ENCODE measurements at regions of chr11 and their contacts with region 1.

Region 1: GRCh38 chr11:128522055-128522942 is 65.1 kb downstream of the ETS1 start:
- DNase-seq: peak; percentile 81 to 90 (median 87)
- H3K4me3 ChIP-seq: peak overlapping the region; percentile 50 to 92
- H3K4me3 Mint-ChIP-seq: peak overlapping the region; percentile 92 to 100 (median 97)
- H3K27ac ChIP-seq: peak overlapping the region; percentile 89
- H3K27ac Mint-ChIP-seq: peak overlapping the region; percentile 96 to 99 (median 98)
- H3K4me1 ChIP-seq: peaks cover 45% of the 10 kb centered on the region
- H3K4me1 Mint-ChIP-seq: peaks cover 33 to 59% (median 44%) of the 10 kb centered on the region in 4 donors
- H3K27me3 ChIP-seq: no peaks in the 10 kb centered on the region
- H3K27me3 Mint-ChIP-seq: no peaks in the 10 kb centered on the region

Region 2: GRCh38 chr11:128172046-128172878 is 350.0 kb before region 1 on chr11:
- CTCF ChIA-PET with region 1: interaction called, 3 read pairs
- POLR2A ChIA-PET with region 1: interaction called, 5 read pairs
- intact Hi-C with region 1: loop called (anchors 5 kb)
- DNase-seq: peak; percentile 75 to 81 (median 77)
- H3K4me3 ChIP-seq: no peak overlapping the region
- H3K4me3 Mint-ChIP-seq: no peak overlapping the region
- H3K27ac ChIP-seq: no peak overlapping the region
- H3K27ac Mint-ChIP-seq: peak overlapping the region in 1 of 7 donors; percentile 11
- H3K4me1 ChIP-seq: no peaks in the 10 kb centered on the region
- H3K4me1 Mint-ChIP-seq: peaks cover 0 to 4% (median under 1%) of the 10 kb centered on the region in 4 donors
- H3K27me3 ChIP-seq: no peaks in the 10 kb centered on the region
- H3K27me3 Mint-ChIP-seq: no peaks in the 10 kb centered on the region

Region 3: GRCh38 chr11:128342511-128343134 is 179.7 kb before region 1 on chr11:
- CTCF ChIA-PET with region 1: interaction called, 3 read pairs
- POLR2A ChIA-PET with region 1: interaction called, 82 read pairs
- intact Hi-C with region 1: no loop called
- DNase-seq: peak; percentile 61 to 92 (median 66)
- H3K4me3 ChIP-seq: peak overlapping the region in 1 of 2 donors; percentile 25
- H3K4me3 Mint-ChIP-seq: peak overlapping the region in 7 of 8 donors; percentile 64 to 90 (median 83)
- H3K27ac ChIP-seq: peak overlapping the region; percentile 85
- H3K27ac Mint-ChIP-seq: peak overlapping the region; percentile 96 to 100 (median 99)
- H3K4me1 ChIP-seq: peaks cover 87% of the 10 kb centered on the region
- H3K4me1 Mint-ChIP-seq: peaks cover 70 to 99% (median 86%) of the 10 kb centered on the region in 4 donors
- H3K27me3 ChIP-seq: no peaks in the 10 kb centered on the region
- H3K27me3 Mint-ChIP-seq: no peaks in the 10 kb centered on the region

Region 4: DNA sequence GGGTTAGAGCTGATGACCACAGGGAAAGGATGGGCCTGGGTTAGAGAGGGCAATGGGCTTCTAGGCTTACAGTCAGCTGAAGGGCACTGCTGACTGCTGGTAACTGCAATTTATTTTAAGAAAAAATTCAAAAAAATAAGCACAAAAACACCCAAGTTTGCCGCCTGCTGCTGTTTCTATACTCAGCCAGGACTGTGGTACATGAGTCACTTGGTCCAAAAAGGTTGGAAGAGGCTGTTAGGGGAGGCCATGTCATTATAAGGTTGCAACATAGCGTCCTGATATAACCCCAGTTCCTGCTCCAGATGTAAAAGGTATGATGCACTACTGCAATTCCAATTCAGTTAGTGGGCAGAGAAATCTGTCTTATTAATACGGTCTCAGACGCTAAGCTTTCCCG is 33.8 kb before region 1 on chr11:
- CTCF ChIA-PET with region 1: interaction called, 43 read pairs
- POLR2A ChIA-PET with region 1: interaction called, 1,148 read pairs
- intact Hi-C with region 1: no loop called
- DNase-seq: peak in 1 of 5 donors; percentile 85
- H3K4me3 ChIP-seq: peak overlapping the region in 1 of 2 donors; percentile 11
- H3K4me3 Mint-ChIP-seq: peak overlapping the region; percentile 10 to 81 (median 68)
- H3K27ac ChIP-seq: peak overlapping the region; percentile 89
- H3K27ac Mint-ChIP-seq: peak overlapping the region; percentile 90 to 99 (median 97)
- H3K4me1 ChIP-seq: peaks cover 99% of the 10 kb centered on the region
- H3K4me1 Mint-ChIP-seq: peaks cover 92 to 99% (median 95%) of the 10 kb centered on the region in 4 donors
- H3K27me3 ChIP-seq: no peaks in the 10 kb centered on the region
- H3K27me3 Mint-ChIP-seq: no peaks in the 10 kb centered on the region

Region 5: GRCh38 chr11:128552783-128553661 is 30.7 kb after region 1 on chr11:
- CTCF ChIA-PET with region 1: interaction called, 5 read pairs
- POLR2A ChIA-PET with region 1: interaction called, 56 read pairs
- intact Hi-C with region 1: loop called (anchors 1 kb)
- DNase-seq: peak in 4 of 5 donors; percentile 16 to 41 (median 30)
- H3K4me3 ChIP-seq: no peak overlapping the region
- H3K4me3 Mint-ChIP-seq: peak overlapping the region; percentile 45 to 69 (median 64)
- H3K27ac ChIP-seq: peak overlapping the region; percentile 28
- H3K27ac Mint-ChIP-seq: peak overlapping the region; percentile 73 to 94 (median 87)
- H3K4me1 ChIP-seq: peaks cover 59% of the 10 kb centered on the region
- H3K4me1 Mint-ChIP-seq: peaks cover 42 to 62% (median 50%) of the 10 kb centered on the region in 4 donors
- H3K27me3 ChIP-seq: no peaks in the 10 kb centered on the region
- H3K27me3 Mint-ChIP-seq: no peaks in the 10 kb centered on the region

Region 6: DNA sequence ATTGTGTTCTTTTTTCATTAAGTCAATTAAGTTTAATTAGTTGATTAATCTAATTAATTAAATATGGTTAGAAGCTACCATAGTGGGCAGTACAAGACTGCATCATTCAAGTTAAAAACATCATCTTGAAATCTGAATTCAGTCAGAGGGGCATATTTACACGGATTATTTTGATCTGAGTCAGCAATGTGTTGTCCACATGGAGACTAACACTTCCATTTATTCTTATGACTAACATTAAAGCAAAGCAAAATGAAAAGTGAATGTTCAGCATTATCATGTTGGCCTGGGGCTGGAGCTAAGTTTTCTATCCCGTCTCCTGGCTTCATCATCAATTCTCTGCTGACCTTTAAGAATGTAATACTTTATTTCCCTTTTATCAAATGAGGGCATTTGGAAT is 188.8 kb after region 1 on chr11:
- CTCF ChIA-PET with region 1: no interaction called
- POLR2A ChIA-PET with region 1: no interaction called
- intact Hi-C with region 1: no loop called
- DNase-seq: no peak
- H3K4me3 ChIP-seq: no peak overlapping the region
- H3K4me3 Mint-ChIP-seq: peak overlapping the region in 4 of 8 donors; percentile 5 to 39 (median 24)
- H3K27ac ChIP-seq: no peak overlapping the region
- H3K27ac Mint-ChIP-seq: peak overlapping the region in 5 of 7 donors; percentile 10 to 97 (median 43)
- H3K4me1 ChIP-seq: peaks cover 100% of the 10 kb centered on the region
- H3K4me1 Mint-ChIP-seq: peaks cover 81 to 100% (median 94%) of the 10 kb centered on the region in 4 donors
- H3K27me3 ChIP-seq: no peaks in the 10 kb centered on the region
- H3K27me3 Mint-ChIP-seq: no peaks in the 10 kb centered on the region

Region 7: DNA sequence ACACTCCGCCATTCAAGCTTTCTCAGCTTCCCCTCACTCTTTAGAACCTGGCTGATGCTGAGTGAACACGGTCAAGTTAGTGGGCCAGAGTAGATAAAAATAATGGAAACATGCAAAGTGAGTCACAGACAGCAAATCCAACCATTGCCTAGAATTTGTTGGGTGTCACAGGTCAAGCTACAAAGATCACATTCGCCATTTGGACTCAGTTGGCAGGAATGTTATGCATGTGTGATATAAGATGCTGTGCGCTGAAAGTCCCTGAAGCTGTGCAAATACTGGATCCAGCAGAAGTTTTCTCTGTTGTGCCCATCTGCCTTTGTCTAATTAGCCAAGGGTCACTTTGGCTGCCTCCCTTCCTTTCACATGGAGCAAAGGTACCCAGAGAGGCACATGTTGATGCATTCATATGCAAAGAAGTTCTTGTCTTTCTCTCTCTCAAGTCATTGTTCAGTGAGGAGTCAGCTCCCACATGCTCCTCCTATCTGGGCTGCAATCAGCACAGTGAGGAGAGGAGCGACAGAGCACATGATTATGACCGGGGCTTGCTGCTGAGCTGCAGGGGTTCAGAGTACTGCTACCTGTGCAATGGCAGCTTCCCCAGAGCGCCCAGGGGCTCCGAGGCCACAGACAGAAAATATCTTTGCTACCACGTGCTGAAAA is 211.3 kb after region 1 on chr11:
- CTCF ChIA-PET with region 1: no interaction called
- POLR2A ChIA-PET with region 1: interaction called, 4 read pairs
- intact Hi-C with region 1: loop called (anchors 10 kb)
- DNase-seq: peak in 2 of 5 donors; percentile 30 to 70
- H3K4me3 ChIP-seq: peak overlapping the region; percentile 8 to 32
- H3K4me3 Mint-ChIP-seq: peak overlapping the region; percentile 74 to 94 (median 84)
- H3K27ac ChIP-seq: peak overlapping the region; percentile 27
- H3K27ac Mint-ChIP-seq: peak overlapping the region; percentile 80 to 97 (median 88)
- H3K4me1 ChIP-seq: peaks cover 100% of the 10 kb centered on the region
- H3K4me1 Mint-ChIP-seq: peaks cover 82 to 100% (median 94%) of the 10 kb centered on the region in 4 donors
- H3K27me3 ChIP-seq: no peaks in the 10 kb centered on the region
- H3K27me3 Mint-ChIP-seq: no peaks in the 10 kb centered on the region

Measured in CD4-positive, alpha-beta memory T cell (primary cell).